ENCODE measurements at regions of chr18 and their contacts with region 1.

Region 1: GRCh38 chr18:28050545-28050944 is 126.4 kb downstream of the CDH2 start:
- DNase-seq: no peak

Region 2: GRCh38 chr18:27500531-27500930 is 550.0 kb before region 1 on chr18:
- intact Hi-C with region 1: no loop called
- DNase-seq: no peak

Region 3: GRCh38 chr18:28003451-28003850 is 47.1 kb before region 1 on chr18:
- intact Hi-C with region 1: loop called in 1 of 2 experiments (anchors 5 kb)
- DNase-seq: no peak

Region 4: GRCh38 chr18:28019425-28020108 is 31.0 kb before region 1 on chr18:
- intact Hi-C with region 1: no loop called
- DNase-seq: no peak

Measured in posterior vena cava (tissue), 2 donors.